Adrenal gland (tissue), 19 donors: ENCODE measurements at regions of chr7 and their contacts with region 1.

Region 1: GRCh38 chr7:129298268-129298893 is 73.6 kb downstream of the AHCYL2 start:
- DNase-seq: peak; percentile 43 to 88 (median 65)
- H3K4me3 ChIP-seq: no peak overlapping the region
- H3K27ac ChIP-seq: no peak overlapping the region
- H3K4me1 ChIP-seq: peaks cover 5 to 13% of the 10 kb centered on the region in 2 donors
- H3K27me3 ChIP-seq: no peaks in the 10 kb centered on the region
- CTCF ChIP-seq: peak; percentile 59 to 79 (median 69)
- POLR2A ChIP-seq: no peak

Region 2: GRCh38 chr7:129218514-129219062 is 79.8 kb before region 1 on chr7:
- intact Hi-C with region 1: loop called (anchors 2 to 5 kb)
- DNase-seq: peak; percentile 83 to 96 (median 90)
- H3K4me3 ChIP-seq: no peak overlapping the region
- H3K27ac ChIP-seq: no peak overlapping the region
- H3K4me1 ChIP-seq: no peaks in the 10 kb centered on the region
- H3K27me3 ChIP-seq: no peaks in the 10 kb centered on the region
- CTCF ChIP-seq: peak; percentile 90 to 97 (median 94)
- POLR2A ChIP-seq: no peak

Region 3: DNA sequence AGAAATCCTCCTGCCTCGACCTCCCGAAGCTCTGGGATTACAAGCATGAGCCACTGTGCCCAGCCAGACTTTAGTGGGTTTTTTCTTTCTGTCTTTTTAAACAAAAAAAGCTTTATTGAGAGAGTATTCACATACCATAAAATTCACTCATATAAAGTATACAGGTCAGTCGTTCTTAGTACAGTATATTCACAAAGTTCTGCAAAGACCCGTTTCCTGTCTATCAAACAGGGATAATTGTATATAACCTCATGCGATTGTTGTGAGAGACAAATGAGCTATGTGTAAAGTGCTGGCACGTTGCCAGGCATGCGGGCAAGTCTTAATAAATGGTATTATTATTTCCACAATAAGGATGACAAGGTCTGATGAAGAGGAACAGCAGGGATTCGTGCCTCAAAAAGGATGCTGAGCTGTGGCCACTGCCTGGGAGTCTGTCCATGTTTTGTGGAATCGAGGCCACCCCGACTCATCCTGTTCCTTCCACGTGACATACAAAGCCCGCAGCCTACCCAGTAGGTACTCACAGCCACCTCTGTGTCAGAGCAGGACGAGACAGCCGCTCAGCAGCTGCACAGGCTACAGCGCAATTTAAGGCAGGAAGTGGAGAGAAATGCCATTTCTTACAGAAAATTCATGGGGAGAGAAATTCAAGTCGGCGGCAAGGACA is 255.6 kb after region 1 on chr7:
- intact Hi-C with region 1: no loop called
- DNase-seq: peak in 2 of 7 donors; percentile 14 to 53
- H3K4me3 ChIP-seq: no peak overlapping the region
- H3K27ac ChIP-seq: no peak overlapping the region
- H3K4me1 ChIP-seq: no peaks in the 10 kb centered on the region
- H3K27me3 ChIP-seq: no peaks in the 10 kb centered on the region
- CTCF ChIP-seq: no peak
- POLR2A ChIP-seq: no peak